Caco-2 (cell line): ENCODE measurements at regions of chr5 and their contacts with region 1.

Region 1: DNA sequence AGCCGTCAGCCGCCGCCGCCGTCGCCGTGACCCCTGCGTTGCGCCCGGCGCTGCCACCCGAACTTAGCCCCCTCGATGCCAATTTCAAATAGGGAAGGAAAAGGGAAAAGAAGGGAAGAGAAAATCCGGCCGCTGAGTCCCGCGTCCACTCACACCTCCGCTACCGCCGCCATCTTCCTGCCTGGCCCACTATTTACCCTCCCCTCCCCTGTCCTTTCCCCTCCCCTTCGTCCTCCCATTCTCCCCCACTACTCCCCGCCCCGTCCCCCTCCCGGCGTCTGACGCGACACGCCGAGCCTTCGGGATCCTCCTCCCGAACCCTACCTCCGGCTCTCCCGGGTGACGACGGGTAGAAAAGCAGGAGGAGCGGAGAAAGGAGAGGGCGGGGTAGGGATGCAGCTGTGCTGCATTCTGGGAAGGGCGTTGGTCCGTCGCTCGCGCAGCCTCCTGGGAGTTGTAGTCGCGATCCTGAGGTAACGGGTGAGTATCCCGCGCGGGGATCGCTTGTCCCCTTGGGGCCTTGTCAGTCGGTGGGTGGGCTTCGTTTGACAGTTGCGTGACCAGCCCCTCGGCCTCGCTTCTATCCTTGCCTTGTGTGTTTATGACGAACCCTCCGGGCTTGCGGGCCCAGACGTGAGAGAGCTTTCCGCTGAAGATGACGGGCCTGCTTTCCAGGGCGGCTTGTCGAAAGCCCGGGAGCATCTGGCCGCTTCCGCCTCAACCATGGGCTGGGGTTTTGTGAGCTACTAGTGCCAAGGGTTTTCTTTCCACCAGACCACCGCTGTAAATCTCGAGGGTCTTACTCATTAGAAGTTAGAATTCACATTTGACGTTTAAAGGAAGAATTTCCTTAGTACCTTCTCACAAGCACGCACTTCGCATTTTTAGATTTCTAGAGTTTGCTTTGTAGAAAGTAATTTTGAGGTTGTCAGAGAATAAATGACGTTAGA is at the starts of genes CERT1 and POLK:
- DNase-seq: peak; percentile 98 to 99
- H3K4me3 ChIP-seq: peak within 1 kb of the TSS; percentile 98
- H3K4me3 Mint-ChIP-seq: peak within 1 kb of the TSS; percentile 100
- H3K27ac Mint-ChIP-seq: peak within 1 kb of the TSS; percentile 91
- H3K4me1 ChIP-seq: peaks cover 5% of the 10 kb centered on the region
- H3K4me1 Mint-ChIP-seq: peaks cover 15% of the 10 kb centered on the region
- H3K27me3 ChIP-seq: no peaks in the 10 kb centered on the region
- H3K27me3 Mint-ChIP-seq: no peaks in the 10 kb centered on the region
- CTCF ChIP-seq: no peak
- total RNA-seq, gene CERT1: 42.7 and 44.3 TPM in 2 replicates
- total RNA-seq, gene POLK: 7.5 and 11.1 TPM in 2 replicates

Region 2: GRCh38 chr5:75426215-75426614 is 85.5 kb before region 1 on chr5:
- CTCF ChIA-PET with region 1: no interaction called
- POLR2A ChIA-PET with region 1: no interaction called
- intact Hi-C with region 1: loop called (anchors 1 kb)
- DNase-seq: peak in 1 of 2 experiments; percentile 17
- H3K4me3 ChIP-seq: no peak overlapping the region
- H3K4me3 Mint-ChIP-seq: no peak overlapping the region
- H3K27ac Mint-ChIP-seq: no peak overlapping the region
- H3K4me1 ChIP-seq: no peaks in the 10 kb centered on the region
- H3K4me1 Mint-ChIP-seq: peaks cover 18% of the 10 kb centered on the region
- H3K27me3 ChIP-seq: no peaks in the 10 kb centered on the region
- H3K27me3 Mint-ChIP-seq: no peaks in the 10 kb centered on the region
- CTCF ChIP-seq: peak in 1 of 2 experiments; percentile 41

Region 3: GRCh38 chr5:75465480-75465879 is 46.2 kb before region 1 on chr5:
- CTCF ChIA-PET with region 1: interaction called, 3 read pairs
- POLR2A ChIA-PET with region 1: no interaction called
- intact Hi-C with region 1: loop called (anchors 5 kb)
- DNase-seq: no peak
- H3K4me3 ChIP-seq: no peak overlapping the region
- H3K4me3 Mint-ChIP-seq: no peak overlapping the region
- H3K27ac Mint-ChIP-seq: no peak overlapping the region
- H3K4me1 ChIP-seq: peaks cover 9% of the 10 kb centered on the region; the same call in 1 of the 2 replicates
- H3K4me1 Mint-ChIP-seq: peaks cover 44% of the 10 kb centered on the region
- H3K27me3 ChIP-seq: no peaks in the 10 kb centered on the region
- H3K27me3 Mint-ChIP-seq: no peaks in the 10 kb centered on the region
- CTCF ChIP-seq: no peak

Region 4: GRCh38 chr5:75524071-75524470 is 12.4 kb after region 1 on chr5:
- CTCF ChIA-PET with region 1: no interaction called
- POLR2A ChIA-PET with region 1: interaction called, 3 read pairs
- intact Hi-C with region 1: loop called (anchors 1 kb)
- DNase-seq: no peak
- H3K4me3 ChIP-seq: no peak overlapping the region
- H3K4me3 Mint-ChIP-seq: peak overlapping the region; percentile 55
- H3K27ac Mint-ChIP-seq: peak overlapping the region; percentile 77
- H3K4me1 ChIP-seq: peaks cover 20% of the 10 kb centered on the region
- H3K4me1 Mint-ChIP-seq: peaks cover 22% of the 10 kb centered on the region
- H3K27me3 ChIP-seq: no peaks in the 10 kb centered on the region
- H3K27me3 Mint-ChIP-seq: no peaks in the 10 kb centered on the region
- CTCF ChIP-seq: no peak

Region 5: DNA sequence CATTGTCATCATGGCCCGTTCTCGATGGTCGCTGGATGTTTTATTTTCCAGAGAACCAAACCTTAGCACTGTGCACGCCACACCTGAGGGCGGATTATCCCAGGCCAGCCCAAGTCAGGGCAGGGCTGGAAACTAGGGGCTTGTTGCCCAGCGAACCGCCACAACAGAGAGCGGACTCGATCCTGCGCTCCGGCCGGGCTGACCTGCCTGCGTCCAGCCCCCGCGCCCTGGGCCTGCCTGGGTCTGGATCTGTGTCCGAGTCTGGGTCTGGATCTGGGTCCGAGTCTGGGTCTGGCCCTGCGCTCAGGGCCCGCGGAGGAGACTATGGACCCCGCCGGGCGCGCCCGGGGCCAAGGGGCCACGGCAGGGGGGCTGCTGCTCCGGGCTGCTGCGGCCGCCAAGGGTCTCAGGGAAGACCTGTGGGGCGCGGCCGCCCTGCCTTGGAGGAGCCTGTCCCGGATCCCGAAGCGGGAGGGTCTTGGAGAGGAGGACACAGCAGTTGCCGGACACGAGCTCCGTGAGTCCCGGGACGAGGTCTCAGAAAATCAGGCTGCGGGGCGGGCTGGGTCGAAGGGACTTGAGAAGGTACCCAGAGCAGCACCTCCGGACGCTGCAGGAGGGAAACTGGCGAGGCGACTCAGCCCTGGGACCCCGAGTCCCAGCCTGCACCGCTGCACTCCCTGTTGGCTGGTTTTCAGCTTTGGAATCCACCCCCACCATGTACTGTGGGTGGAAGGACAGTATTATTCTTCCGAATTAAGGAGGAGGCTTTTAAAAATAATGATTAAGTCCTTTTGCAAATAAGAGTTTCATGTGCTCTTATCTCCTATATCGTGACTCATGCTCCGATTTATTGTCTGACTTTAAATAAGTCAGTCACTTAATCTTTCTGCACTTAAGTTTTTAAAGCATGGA is 99.9 kb after region 1 on chr5 and contains the start of gene ANKDD1B:
- CTCF ChIA-PET with region 1: no interaction called
- POLR2A ChIA-PET with region 1: no interaction called
- intact Hi-C with region 1: loop called (anchors 5 kb)
- DNase-seq: peak; percentile 61 to 70
- H3K4me3 ChIP-seq: peak within 1 kb of the TSS; percentile 74
- H3K4me3 Mint-ChIP-seq: peak within 1 kb of the TSS; percentile 99
- H3K27ac Mint-ChIP-seq: peak within 1 kb of the TSS; percentile 87
- H3K4me1 ChIP-seq: peaks cover 55% of the 10 kb centered on the region
- H3K4me1 Mint-ChIP-seq: peaks cover 28% of the 10 kb centered on the region
- H3K27me3 ChIP-seq: no peaks in the 10 kb centered on the region
- H3K27me3 Mint-ChIP-seq: no peaks in the 10 kb centered on the region
- CTCF ChIP-seq: no peak
- total RNA-seq, gene ANKDD1B: 0.63 and 0.88 TPM in 2 replicates

Region 6: DNA sequence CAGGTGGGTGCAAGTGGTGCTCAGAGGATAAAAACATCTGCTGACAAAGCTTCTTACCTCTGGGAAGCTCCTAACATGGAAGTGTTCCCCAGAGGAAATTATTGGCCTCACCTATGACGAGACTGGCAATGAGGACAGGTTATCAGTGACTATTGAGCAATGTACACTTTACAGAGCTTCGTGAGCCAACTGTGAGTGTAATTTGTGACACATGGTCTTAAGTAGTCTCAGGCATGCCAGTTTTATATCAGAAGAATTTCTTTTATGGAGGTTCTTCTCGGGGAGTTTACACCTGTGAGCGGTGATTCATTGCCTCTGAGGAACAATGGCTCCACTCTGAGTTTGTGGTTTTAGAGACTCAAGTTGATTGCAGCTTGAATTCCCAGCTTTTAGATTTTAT is 110.9 kb after region 1 on chr5:
- CTCF ChIA-PET with region 1: no interaction called
- POLR2A ChIA-PET with region 1: interaction called, 18 read pairs
- intact Hi-C with region 1: no loop called
- DNase-seq: peak; percentile 59 to 77
- H3K4me3 ChIP-seq: no peak overlapping the region
- H3K4me3 Mint-ChIP-seq: no peak overlapping the region
- H3K27ac Mint-ChIP-seq: peak overlapping the region; percentile 61
- H3K4me1 ChIP-seq: peaks cover 71% of the 10 kb centered on the region
- H3K4me1 Mint-ChIP-seq: peaks cover 39% of the 10 kb centered on the region
- H3K27me3 ChIP-seq: no peaks in the 10 kb centered on the region
- H3K27me3 Mint-ChIP-seq: no peaks in the 10 kb centered on the region
- CTCF ChIP-seq: no peak

Region 7: DNA sequence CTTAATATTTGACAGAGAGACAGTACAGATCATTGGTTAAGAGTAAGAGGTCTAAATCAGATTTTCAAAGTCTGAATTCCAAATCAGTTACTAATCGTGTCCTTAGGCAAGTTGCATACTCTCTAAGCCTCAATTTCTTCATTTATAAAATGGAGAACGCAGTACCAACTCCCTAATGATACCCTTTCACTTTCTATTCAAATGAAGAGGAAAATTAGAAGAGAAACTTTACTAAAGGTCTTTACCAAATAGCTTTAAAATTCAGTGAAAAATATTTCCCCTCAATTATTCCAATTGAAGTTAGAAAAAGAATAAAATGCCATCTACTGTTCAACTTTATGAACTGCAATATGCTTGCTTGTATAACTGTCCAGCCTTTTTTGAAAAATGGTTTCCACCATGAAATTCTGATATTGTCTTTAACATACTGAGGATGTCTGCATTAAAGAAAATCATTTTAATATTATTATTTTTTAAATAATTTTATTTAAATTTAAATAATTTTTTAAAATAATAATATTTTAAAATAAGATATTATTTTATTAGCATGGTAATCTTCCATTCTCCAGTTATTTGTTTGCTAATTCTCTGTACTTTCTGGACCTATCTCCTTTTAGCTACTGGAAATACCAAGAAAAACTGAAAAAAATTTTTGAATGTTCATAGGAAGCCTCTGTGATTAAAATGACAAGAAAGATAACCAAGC is 169.6 kb after region 1 on chr5:
- CTCF ChIA-PET with region 1: interaction called, 3 read pairs
- POLR2A ChIA-PET with region 1: no interaction called
- intact Hi-C with region 1: loop called (anchors 5 kb)
- DNase-seq: no peak
- H3K4me3 ChIP-seq: no peak overlapping the region
- H3K4me3 Mint-ChIP-seq: no peak overlapping the region
- H3K27ac Mint-ChIP-seq: no peak overlapping the region
- H3K4me1 ChIP-seq: peaks cover 5% of the 10 kb centered on the region; the same call in 1 of the 2 replicates
- H3K4me1 Mint-ChIP-seq: no peaks in the 10 kb centered on the region
- H3K27me3 ChIP-seq: no peaks in the 10 kb centered on the region
- H3K27me3 Mint-ChIP-seq: no peaks in the 10 kb centered on the region
- CTCF ChIP-seq: peak; percentile 56 to 85